Sciatic nerve (tissue), 2 donors: ENCODE measurements at regions of chr14 and their contacts with region 1.

Region 1: DNA sequence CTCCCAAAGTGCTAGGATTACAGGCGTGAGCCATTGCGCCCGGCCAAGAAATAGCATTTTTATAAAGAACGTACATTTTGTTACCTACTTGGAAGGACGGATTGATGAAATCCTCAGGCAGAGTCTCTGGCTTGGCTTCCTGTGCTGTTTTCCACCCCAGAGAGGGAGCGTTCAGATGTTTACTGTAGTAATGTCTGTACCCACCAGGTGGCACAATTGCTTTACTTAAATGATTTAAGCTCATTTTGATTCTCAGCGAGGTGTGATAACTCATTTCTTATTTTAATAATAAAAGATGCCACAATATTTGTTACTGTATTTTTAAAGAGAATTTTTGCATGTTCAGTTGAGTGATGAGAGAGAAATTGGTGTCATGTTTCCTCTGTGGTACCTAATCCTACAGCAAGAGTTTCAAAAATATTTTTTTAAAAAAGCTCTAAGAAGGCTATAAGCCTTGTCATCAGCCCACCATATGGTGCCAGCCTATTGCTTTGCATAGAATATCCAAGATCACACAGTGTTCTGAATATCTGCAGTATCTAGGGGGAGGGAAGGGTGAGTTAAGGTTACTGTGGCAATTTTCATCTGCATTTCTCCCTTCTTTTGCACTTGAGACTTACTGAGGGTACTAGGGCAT is 82.6 kb upstream of the TRAF3 start:
- DNase-seq: peak; percentile 69
- ATAC-seq: peak; percentile 89

Region 2: DNA sequence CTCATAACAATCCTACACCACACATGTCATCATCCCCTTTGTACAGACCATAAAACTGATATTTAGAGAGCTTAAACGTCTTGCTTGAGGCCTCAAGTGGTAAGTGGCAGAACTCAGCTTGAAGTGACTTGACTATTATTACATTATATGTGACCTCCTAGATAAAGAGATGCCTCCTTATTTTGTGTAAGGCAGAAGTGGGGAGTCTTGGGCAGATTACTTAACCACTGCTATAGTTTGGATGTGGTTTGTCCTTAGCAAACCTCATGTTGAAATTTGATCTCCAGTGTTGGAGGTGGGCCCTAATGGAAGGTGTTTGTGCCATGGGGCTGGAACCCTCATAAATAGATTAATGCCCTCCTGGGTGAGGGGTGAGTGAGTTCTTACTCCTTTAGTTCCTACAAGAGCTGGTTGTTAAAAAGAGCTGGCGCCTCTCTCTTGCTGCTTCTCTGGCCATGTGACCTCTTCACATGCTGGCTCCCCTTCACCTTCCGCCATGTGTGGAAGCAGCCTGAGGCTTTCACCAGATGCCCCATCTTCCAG is 64.8 kb before region 1 on chr14:
- intact Hi-C with region 1: no loop called
- DNase-seq: no peak
- ATAC-seq: no peak

Region 3: DNA sequence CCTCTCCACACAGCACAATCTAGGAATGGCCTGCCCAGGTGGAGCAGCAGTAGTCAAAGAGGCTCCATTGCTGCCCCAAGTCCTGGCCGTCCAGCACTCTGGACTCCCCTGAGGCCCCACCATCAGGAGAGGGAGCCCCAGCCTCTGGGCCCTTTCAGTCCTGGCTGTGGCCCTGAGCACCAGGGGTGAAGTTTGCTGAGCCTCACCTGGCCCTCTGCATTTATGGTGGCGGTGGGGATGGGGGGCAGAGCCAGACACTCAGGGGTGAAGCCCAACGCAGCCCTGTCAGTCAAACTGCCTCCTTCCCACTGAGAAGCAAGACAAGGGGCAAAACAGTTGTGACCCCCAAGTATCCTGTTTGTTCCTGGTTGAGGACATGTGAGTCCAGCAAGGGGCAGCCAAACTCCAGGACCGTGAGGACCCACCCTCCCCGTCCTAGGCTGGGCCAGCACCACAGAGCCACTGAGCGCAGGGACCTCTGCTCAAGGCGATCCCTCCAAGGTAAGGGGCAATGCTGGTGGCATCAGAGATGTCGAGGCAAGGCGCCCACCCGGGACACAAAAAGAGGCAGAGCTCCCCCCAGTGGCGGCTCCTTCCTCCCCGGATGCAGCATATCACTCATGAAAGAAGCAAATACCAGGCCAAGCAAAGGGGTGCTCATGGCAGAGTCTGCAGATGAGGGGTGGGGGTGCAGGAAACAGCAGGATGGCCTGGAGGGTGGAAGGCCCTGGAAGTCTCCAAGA is 223.0 kb after region 1 on chr14:
- intact Hi-C with region 1: loop called (anchors 10 kb)
- DNase-seq: peak; percentile 77
- ATAC-seq: peak; percentile 56